ENCODE measurements at regions of chrX and their contacts with region 1.

Region 1: DNA sequence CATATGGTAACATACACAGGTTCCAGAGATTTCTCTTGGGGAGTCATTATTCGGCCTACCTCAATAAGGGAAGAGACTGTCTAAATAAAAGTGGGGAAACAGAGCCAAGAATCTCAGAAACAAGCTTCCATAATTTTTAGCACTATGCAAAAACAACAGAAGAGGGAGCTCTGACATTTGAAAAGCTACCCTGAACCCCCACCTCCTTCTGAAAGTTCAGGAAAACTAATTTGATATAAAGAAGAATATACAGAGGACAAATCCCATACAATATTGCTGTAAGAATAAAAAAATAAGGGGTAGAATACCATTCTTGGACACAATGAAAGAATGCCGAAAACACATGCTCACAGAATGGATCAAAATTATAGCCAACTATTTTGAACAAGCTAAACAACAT is 14.3 kb upstream of the ZNF41 start:
- DNase-seq: peak in 1 of 9 donors; percentile 4
- ATAC-seq: no peak
- H3K4me3 ChIP-seq: no peak overlapping the region
- H3K4me3 Mint-ChIP-seq: no peak overlapping the region
- H3K27ac ChIP-seq: no peak overlapping the region
- H3K27ac Mint-ChIP-seq: no peak overlapping the region
- H3K4me1 ChIP-seq: no peaks in the 10 kb centered on the region
- H3K4me1 Mint-ChIP-seq: peaks cover 0 to 2% (median 0%) of the 10 kb centered on the region in 7 donors
- H3K27me3 ChIP-seq: no peaks in the 10 kb centered on the region
- H3K27me3 Mint-ChIP-seq: no peaks in the 10 kb centered on the region

Region 2: DNA sequence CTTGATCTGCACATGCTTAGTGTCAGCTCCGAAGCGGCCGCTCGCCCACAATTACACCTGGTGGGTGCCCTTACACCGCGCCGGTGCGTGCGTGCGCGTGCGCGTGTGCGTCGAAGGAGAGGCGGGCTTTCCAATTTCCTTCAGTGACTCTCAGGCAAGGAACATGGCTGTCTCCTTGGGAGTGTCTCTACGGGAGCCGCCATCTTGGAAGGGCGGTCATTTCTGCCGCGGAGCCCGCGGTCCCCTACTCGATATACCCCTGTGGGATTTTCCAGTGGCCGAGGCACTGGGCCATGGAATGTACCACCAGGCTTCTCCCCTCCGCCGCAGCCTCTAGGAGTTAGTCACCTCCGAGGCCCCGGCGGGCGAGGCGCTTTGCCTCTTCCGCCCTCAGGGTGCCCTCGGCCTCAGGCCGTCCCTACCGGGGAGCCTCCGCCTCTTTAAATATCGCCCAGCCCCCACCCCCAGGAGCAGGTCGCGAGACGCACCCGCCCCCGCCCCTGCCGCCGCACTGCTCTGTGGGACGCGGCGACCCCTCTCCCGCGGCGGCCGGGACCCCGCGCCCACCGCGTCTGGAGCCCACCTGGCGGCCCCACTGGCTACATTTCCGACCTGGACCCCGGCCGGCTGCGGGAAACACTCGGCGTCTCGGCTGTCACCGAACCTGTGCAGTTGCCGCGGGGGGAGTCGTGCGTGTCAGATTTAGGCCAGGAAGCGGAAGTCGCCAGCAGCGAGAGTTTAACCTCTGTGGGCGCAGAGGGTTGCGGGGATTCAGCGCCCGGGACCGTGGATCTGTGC is 14.6 kb before region 1 on chrX and contains the start of gene ZNF41:
- CTCF ChIA-PET with region 1: no interaction called
- POLR2A ChIA-PET with region 1: no interaction called
- intact Hi-C with region 1: no loop called
- DNase-seq: peak; percentile 48 to 84 (median 76)
- ATAC-seq: peak; percentile 95
- H3K4me3 ChIP-seq: peak within 1 kb of the TSS; percentile 85
- H3K4me3 Mint-ChIP-seq: peak within 1 kb of the TSS; percentile 81 to 97 (median 90)
- H3K27ac ChIP-seq: peak within 1 kb of the TSS; percentile 88
- H3K27ac Mint-ChIP-seq: peak within 1 kb of the TSS; percentile 82 to 98 (median 96)
- H3K4me1 ChIP-seq: peaks cover 9 to 22% of the 10 kb centered on the region in 2 donors
- H3K4me1 Mint-ChIP-seq: peaks cover 22 to 50% (median 37%) of the 10 kb centered on the region in 7 donors
- H3K27me3 ChIP-seq: no peaks in the 10 kb centered on the region
- H3K27me3 Mint-ChIP-seq: no peaks in the 10 kb centered on the region
- total RNA-seq, gene ZNF41: 7.5 to 17.8 (median 14.7) TPM

Region 3: GRCh38 chrX:47523297-47523696 is 26.0 kb after region 1 on chrX:
- CTCF ChIA-PET with region 1: interaction called, 3 read pairs
- POLR2A ChIA-PET with region 1: no interaction called
- intact Hi-C with region 1: loop called (anchors 1 kb)
- DNase-seq: peak; percentile 50 to 85 (median 66)
- ATAC-seq: peak; percentile 99
- H3K4me3 ChIP-seq: peak overlapping the region; percentile 43
- H3K4me3 Mint-ChIP-seq: peak overlapping the region; percentile 66 to 82 (median 74)
- H3K27ac ChIP-seq: peak overlapping the region; percentile 3
- H3K27ac Mint-ChIP-seq: peak overlapping the region in 3 of 9 donors; percentile 42 to 47 (median 43)
- H3K4me1 ChIP-seq: no peaks in the 10 kb centered on the region
- H3K4me1 Mint-ChIP-seq: peaks cover 0 to 8% (median 0%) of the 10 kb centered on the region in 7 donors
- H3K27me3 ChIP-seq: no peaks in the 10 kb centered on the region
- H3K27me3 Mint-ChIP-seq: peaks cover 0 to 2% (median 0%) of the 10 kb centered on the region in 5 donors

Measured in naive thymus-derived CD4-positive, alpha-beta T cell (primary cell).